Aorta (tissue), 5 donors: ENCODE measurements at regions of chr15 and their contacts with region 1.

Region 1: GRCh38 chr15:98906712-98907083 is 100.9 kb downstream of the PGPEP1L start:
- DNase-seq: peak in 1 of 2 donors; percentile 61
- ATAC-seq: peak; percentile 34
- H3K4me3 ChIP-seq: no peak overlapping the region
- H3K27ac ChIP-seq: peak overlapping the region; percentile 53 to 94
- H3K4me1 ChIP-seq: peaks cover 6 to 7% of the 10 kb centered on the region in 2 donors
- H3K27me3 ChIP-seq: no peaks in the 10 kb centered on the region

Region 2: GRCh38 chr15:98860281-98861041 is 46.2 kb before region 1 on chr15:
- intact Hi-C with region 1: loop called in 1 of 2 experiments (anchors 5 kb)
- DNase-seq: no peak
- ATAC-seq: no peak
- H3K4me3 ChIP-seq: no peak overlapping the region
- H3K27ac ChIP-seq: peak overlapping the region; percentile 76 to 78
- H3K4me1 ChIP-seq: peaks cover 0 to 24% of the 10 kb centered on the region in 2 donors
- H3K27me3 ChIP-seq: no peaks in the 10 kb centered on the region